Activated CD4-positive, alpha-beta memory T cell treated with anti-CD3 and anti-CD28 coated beads for 36 hours (primary cell): ENCODE measurements at regions of chr11 and their contacts with region 1.

Region 1: GRCh38 chr11:67239783-67240575 is 26.3 kb upstream of the GRK2 start:
- DNase-seq: peak; percentile 99
- H3K4me3 Mint-ChIP-seq: peak overlapping the region; percentile 97
- H3K27ac Mint-ChIP-seq: peak overlapping the region; percentile 100
- H3K4me1 Mint-ChIP-seq: peaks cover 43% of the 10 kb centered on the region
- H3K27me3 Mint-ChIP-seq: no peaks in the 10 kb centered on the region

Region 2: DNA sequence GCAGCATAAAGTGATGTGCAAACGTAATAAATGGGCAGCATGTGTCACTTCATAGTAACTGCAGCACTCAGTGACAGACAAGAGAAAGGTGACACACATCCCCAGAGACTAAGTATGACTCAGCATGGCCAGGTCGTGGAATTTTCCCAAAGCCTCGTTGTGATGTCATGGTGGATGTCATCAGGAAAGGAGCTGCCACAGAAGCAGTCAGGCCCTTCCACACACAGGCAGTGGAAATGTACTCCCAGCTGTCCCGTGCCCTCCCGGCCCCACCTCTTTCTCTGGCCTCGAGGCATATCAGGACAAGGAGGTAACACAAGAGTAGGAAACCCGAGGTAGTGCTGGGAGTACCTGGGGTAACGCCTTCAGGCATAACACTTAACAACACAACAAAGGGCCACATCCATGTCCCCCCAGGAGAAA is 289.9 kb before region 1 on chr11:
- CTCF ChIA-PET with region 1: no interaction called
- POLR2A ChIA-PET with region 1: no interaction called
- intact Hi-C with region 1: no loop called
- DNase-seq: peak; percentile 74
- H3K4me3 Mint-ChIP-seq: no peak overlapping the region
- H3K27ac Mint-ChIP-seq: no peak overlapping the region
- H3K4me1 Mint-ChIP-seq: peaks cover 4% of the 10 kb centered on the region
- H3K27me3 Mint-ChIP-seq: no peaks in the 10 kb centered on the region

Region 3: DNA sequence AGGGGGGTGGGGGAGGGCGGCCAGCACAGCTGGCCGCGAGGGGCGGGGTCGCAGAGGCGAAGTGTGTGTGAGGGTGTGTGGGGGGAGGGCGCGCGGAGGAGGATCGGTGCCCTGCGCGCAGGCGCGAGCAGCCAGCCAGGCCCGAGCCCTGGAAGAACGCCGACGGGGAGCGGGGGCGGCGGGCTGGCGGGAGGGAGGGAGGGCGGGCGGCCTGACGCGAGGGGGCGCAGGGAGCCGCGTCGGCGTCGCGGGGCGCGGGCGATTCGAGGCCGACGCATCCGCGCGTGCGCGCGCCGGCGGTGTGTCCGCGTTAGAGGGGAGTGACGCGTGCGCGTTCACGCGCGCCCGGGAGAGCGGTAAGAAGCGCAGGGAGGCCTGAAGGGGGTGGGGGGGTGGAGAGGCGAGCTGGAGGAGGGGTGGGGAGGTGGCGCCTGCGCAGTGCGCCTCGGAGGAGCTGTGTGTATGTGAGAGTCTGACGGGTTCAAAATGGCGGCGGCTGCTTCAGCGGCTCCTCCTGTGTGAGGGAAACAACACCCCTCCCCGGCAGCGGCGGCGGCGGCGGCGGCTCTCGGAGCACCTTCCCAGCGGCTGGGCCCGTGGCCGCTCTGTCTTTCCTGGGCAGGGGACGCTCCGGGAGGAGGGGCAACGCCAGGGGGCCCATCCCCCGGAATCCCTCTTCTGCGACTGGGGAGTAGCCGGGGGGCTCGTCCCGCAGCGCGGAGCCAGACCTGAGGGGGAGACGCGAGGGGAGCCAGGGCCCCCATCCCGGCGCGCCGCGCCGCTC is 121.0 kb before region 1 on chr11 and contains the start of gene KDM2A:
- CTCF ChIA-PET with region 1: interaction called, 5 read pairs
- POLR2A ChIA-PET with region 1: interaction called, 17 read pairs
- intact Hi-C with region 1: loop called (anchors 1 kb)
- DNase-seq: peak; percentile 100
- H3K4me3 Mint-ChIP-seq: peak within 1 kb of the TSS; percentile 99
- H3K27ac Mint-ChIP-seq: peak within 1 kb of the TSS; percentile 93
- H3K4me1 Mint-ChIP-seq: peaks cover 21% of the 10 kb centered on the region
- H3K27me3 Mint-ChIP-seq: no peaks in the 10 kb centered on the region
- total RNA-seq, gene KDM2A: 65.1 to 69.6 TPM

Region 4: DNA sequence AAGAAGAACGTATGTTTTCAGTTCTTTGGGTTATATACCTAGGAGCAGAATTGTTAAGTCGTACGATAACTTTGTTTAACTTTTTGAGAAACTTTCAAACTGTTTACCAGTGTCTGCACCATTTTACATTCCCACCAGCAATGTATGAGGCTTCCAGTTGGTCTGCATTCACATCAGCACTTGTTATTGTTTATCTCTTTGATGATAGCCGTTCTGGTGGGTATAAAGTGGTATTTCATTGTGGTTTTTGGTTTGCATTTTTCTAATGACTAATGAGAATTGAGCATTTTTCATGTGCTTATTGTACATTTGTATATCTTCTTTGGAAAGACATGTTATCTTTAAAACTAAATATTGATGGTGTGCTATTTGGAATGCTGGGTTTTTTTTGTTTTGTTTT is 61.1 kb before region 1 on chr11:
- CTCF ChIA-PET with region 1: no interaction called
- POLR2A ChIA-PET with region 1: no interaction called
- intact Hi-C with region 1: no loop called
- DNase-seq: no peak
- H3K4me3 Mint-ChIP-seq: no peak overlapping the region
- H3K27ac Mint-ChIP-seq: no peak overlapping the region
- H3K4me1 Mint-ChIP-seq: peaks cover 13% of the 10 kb centered on the region
- H3K27me3 Mint-ChIP-seq: no peaks in the 10 kb centered on the region

Region 5: GRCh38 chr11:67252831-67253239 is 12.9 kb after region 1 on chr11:
- CTCF ChIA-PET with region 1: interaction called, 14 read pairs
- POLR2A ChIA-PET with region 1: interaction called, 10 read pairs
- intact Hi-C with region 1: no loop called
- DNase-seq: peak; percentile 49
- H3K4me3 Mint-ChIP-seq: no peak overlapping the region
- H3K27ac Mint-ChIP-seq: peak overlapping the region; percentile 61
- H3K4me1 Mint-ChIP-seq: peaks cover 39% of the 10 kb centered on the region
- H3K27me3 Mint-ChIP-seq: no peaks in the 10 kb centered on the region

Region 6: GRCh38 chr11:67288452-67289225 is 48.7 kb after region 1 on chr11:
- CTCF ChIA-PET with region 1: interaction called, 5 read pairs
- POLR2A ChIA-PET with region 1: interaction called, 23 read pairs
- intact Hi-C with region 1: loop called (anchors 2 kb)
- DNase-seq: peak; percentile 95
- H3K4me3 Mint-ChIP-seq: peak overlapping the region; percentile 66
- H3K27ac Mint-ChIP-seq: peak overlapping the region; percentile 97
- H3K4me1 Mint-ChIP-seq: peaks cover 62% of the 10 kb centered on the region
- H3K27me3 Mint-ChIP-seq: no peaks in the 10 kb centered on the region

Region 7: GRCh38 chr11:67345920-67346799 is 106.2 kb after region 1 on chr11:
- CTCF ChIA-PET with region 1: interaction called, 6 read pairs
- POLR2A ChIA-PET with region 1: interaction called, 12 read pairs
- intact Hi-C with region 1: no loop called
- DNase-seq: peak; percentile 49
- H3K4me3 Mint-ChIP-seq: no peak overlapping the region
- H3K27ac Mint-ChIP-seq: peak overlapping the region; percentile 83
- H3K4me1 Mint-ChIP-seq: peaks cover 47% of the 10 kb centered on the region
- H3K27me3 Mint-ChIP-seq: no peaks in the 10 kb centered on the region